ENCODE measurements at regions of chr17 and their contacts with region 1.

Region 1: GRCh38 chr17:64073771-64074703 is 53.6 kb upstream of the ICAM2 start:
- DNase-seq: peak; percentile 62
- ATAC-seq: peak; percentile 96
- H3K4me3 ChIP-seq: peak overlapping the region; percentile 32; the same call in 1 of the 2 replicates
- H3K27ac ChIP-seq: peak overlapping the region; percentile 72
- H3K4me1 ChIP-seq: peaks cover 46% of the 10 kb centered on the region
- H3K27me3 ChIP-seq: no peaks in the 10 kb centered on the region
- CTCF ChIP-seq: no peak
- EP300 ChIP-seq: peak; percentile 66 to 91; a peak in 3 of 4 replicates
- POLR2A ChIP-seq: no peak
- RAD21 ChIP-seq: no peak; the same call in 1 of the 2 replicates

Region 2: GRCh38 chr17:63988741-63989621 is 85.1 kb before region 1 on chr17:
- CTCF ChIA-PET with region 1: no interaction called
- POLR2A ChIA-PET with region 1: no interaction called
- RAD21 ChIA-PET with region 1: no interaction called
- SMC1A ChIA-PET with region 1: no interaction called
- in situ Hi-C with region 1: no loop called
- intact Hi-C with region 1: no loop called
- DNase-seq: no peak
- ATAC-seq: no peak
- H3K4me3 ChIP-seq: no peak overlapping the region
- H3K27ac ChIP-seq: no peak overlapping the region
- H3K4me1 ChIP-seq: no peaks in the 10 kb centered on the region
- H3K27me3 ChIP-seq: no peaks in the 10 kb centered on the region; a peak in 3 of 4 replicates
- CTCF ChIP-seq: no peak
- EP300 ChIP-seq: no peak
- POLR2A ChIP-seq: no peak
- RAD21 ChIP-seq: no peak

Region 3: DNA sequence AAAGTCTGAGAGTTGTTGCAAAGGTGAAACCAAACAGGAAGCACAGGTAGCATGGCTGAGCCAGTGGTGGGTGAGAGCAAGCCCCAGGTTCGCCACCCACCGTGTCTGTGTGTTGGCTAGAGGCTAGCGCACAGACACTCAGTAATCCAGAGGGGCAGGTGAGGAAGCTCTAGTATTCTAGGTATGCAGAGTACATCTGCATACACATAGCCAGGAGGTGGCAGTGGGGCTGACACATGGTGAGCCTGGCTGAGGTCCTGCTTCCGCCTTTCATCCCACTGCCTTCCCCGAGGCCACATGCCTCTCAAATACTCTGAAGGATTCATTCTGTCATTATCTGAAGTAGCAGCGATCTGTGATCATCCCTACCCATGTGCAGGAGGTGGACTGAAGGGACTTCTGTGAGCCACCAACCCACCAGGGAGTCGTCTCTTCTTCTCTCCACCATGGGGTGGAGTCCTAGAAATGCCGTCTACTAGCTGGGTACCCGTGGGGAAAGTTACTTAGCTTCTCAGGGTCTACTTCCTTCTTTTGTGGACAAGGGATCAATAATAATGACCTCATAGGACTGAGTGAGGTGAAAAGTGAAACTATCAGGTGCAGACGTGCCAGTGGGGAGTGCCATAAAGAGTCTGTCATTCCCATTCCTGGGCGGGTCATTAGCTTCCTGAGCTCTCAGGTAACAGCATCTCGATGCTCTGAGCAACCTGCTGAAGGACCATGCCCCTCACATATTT is 17.6 kb before region 1 on chr17:
- CTCF ChIA-PET with region 1: interaction called, 12 read pairs
- POLR2A ChIA-PET with region 1: interaction called, 29 read pairs
- RAD21 ChIA-PET with region 1: interaction called, 25 read pairs
- SMC1A ChIA-PET with region 1: interaction called, 65 read pairs
- in situ Hi-C with region 1: no loop called
- intact Hi-C with region 1: no loop called
- DNase-seq: peak; percentile 57
- ATAC-seq: peak; percentile 88
- H3K4me3 ChIP-seq: no peak overlapping the region
- H3K27ac ChIP-seq: peak overlapping the region; percentile 35
- H3K4me1 ChIP-seq: peaks cover 30% of the 10 kb centered on the region
- H3K27me3 ChIP-seq: no peaks in the 10 kb centered on the region
- CTCF ChIP-seq: peak in 1 of 3 experiments; percentile 13; a peak in 1 of 6 replicates
- EP300 ChIP-seq: peak in 1 of 2 experiments; percentile 43; a peak in 1 of 4 replicates
- POLR2A ChIP-seq: no peak
- RAD21 ChIP-seq: 0 out of 2 replicates have a peak, but pooled peaks have one; percentile 13

Region 4: DNA sequence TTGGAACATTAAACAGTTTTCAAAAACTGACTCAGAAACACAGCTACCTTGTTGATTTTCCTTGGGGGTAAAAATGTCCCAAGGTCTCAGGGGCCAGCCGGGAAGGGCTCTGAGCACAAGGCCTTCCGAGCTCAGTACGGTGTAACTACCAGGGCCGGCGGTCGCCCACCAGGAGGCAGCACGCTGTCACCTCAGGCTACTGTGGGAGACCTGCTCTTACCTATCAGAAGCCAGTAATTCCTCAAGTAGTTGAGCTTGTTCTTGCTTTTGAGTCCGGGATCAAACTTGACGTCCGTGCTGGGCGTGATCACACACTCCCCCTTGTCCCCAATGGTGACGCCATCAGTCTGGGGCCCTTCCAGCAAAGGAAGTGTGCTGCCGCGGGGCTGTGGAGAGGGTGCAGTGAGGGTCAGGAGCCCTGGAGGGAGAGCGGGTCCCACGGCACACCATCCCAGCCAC is 10.2 kb before region 1 on chr17:
- CTCF ChIA-PET with region 1: interaction called, 12 read pairs
- POLR2A ChIA-PET with region 1: interaction called, 29 read pairs
- RAD21 ChIA-PET with region 1: interaction called, 25 read pairs
- SMC1A ChIA-PET with region 1: interaction called, 65 read pairs
- in situ Hi-C with region 1: no loop called
- intact Hi-C with region 1: no loop called
- DNase-seq: no peak
- ATAC-seq: peak; percentile 51
- H3K4me3 ChIP-seq: no peak overlapping the region
- H3K27ac ChIP-seq: peak overlapping the region; percentile 54; the same call in 1 of the 2 replicates
- H3K4me1 ChIP-seq: peaks cover 37% of the 10 kb centered on the region
- H3K27me3 ChIP-seq: no peaks in the 10 kb centered on the region
- CTCF ChIP-seq: peak; percentile 40 to 49 (median 45)
- EP300 ChIP-seq: no peak
- POLR2A ChIP-seq: no peak
- RAD21 ChIP-seq: peak; percentile 63

Region 5: GRCh38 chr17:64091116-64091515 is 17.1 kb after region 1 on chr17:
- CTCF ChIA-PET with region 1: interaction called, 5 read pairs
- POLR2A ChIA-PET with region 1: interaction called, 19 read pairs
- RAD21 ChIA-PET with region 1: interaction called, 7 read pairs
- SMC1A ChIA-PET with region 1: interaction called, 41 read pairs
- in situ Hi-C with region 1: no loop called
- intact Hi-C with region 1: no loop called
- DNase-seq: peak; percentile 57
- ATAC-seq: peak; percentile 90
- H3K4me3 ChIP-seq: peak overlapping the region; percentile 9; the same call in 1 of the 2 replicates
- H3K27ac ChIP-seq: peak overlapping the region; percentile 54
- H3K4me1 ChIP-seq: peaks cover 42% of the 10 kb centered on the region
- H3K27me3 ChIP-seq: no peaks in the 10 kb centered on the region
- CTCF ChIP-seq: no peak
- EP300 ChIP-seq: no peak
- POLR2A ChIP-seq: 0 out of 2 replicates have a peak, but pooled peaks have one; percentile 11
- RAD21 ChIP-seq: no peak

Region 6: DNA sequence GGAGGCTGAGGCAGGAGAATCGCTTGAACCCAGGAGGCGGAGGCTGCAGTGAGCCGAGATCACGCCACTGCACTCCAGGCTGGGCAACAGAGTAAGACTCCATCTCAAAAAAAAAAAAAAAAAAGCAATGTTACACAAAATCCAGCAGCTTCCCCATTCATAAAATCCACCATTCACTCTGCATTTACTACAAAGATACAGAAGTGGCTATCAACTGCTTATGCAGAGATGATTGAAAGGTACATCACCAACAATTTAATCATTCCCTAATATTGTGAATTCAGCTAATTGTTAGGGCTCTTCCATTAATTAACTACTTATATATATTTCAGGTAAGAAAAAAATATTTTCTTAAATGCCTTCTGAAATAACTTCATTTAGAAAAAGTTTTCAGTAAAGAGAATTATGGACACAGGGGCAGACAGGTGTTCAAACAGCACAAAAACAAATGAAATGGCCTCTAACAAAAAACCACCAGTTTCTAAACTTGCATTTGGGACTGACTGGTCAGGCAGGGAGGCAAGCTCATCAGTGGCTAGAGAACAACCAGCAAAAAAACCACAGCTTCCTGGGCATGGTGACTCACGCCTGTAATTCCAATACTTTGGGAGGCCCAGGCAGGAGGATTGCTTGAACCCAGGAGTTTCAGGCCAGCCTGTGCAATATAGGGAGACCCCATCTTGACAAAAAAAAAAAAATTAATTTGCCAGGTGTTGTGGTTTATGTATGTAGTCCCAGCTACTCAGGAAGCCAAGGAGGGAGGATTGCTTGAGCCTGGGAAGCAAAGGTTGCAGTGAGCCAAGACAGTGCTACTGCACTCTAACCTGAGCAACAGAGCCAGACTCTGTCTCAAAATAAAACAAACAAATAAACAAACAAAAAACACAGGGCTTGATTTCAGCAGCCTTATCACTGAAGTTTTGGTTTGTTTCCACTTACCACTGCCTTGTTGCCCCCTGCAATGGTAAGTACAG is 29.6 kb after region 1 on chr17:
- CTCF ChIA-PET with region 1: interaction called, 4 read pairs
- POLR2A ChIA-PET with region 1: interaction called, 4 read pairs
- RAD21 ChIA-PET with region 1: interaction called, 6 read pairs
- SMC1A ChIA-PET with region 1: interaction called, 13 read pairs
- in situ Hi-C with region 1: no loop called
- intact Hi-C with region 1: no loop called
- DNase-seq: peak; percentile 55
- ATAC-seq: peak; percentile 65
- H3K4me3 ChIP-seq: no peak overlapping the region
- H3K27ac ChIP-seq: peak overlapping the region; percentile 57
- H3K4me1 ChIP-seq: peaks cover 39% of the 10 kb centered on the region
- H3K27me3 ChIP-seq: no peaks in the 10 kb centered on the region
- CTCF ChIP-seq: no peak
- EP300 ChIP-seq: no peak
- POLR2A ChIP-seq: no peak
- RAD21 ChIP-seq: no peak

Region 7: GRCh38 chr17:64117981-64118979 is 44.2 kb after region 1 on chr17:
- CTCF ChIA-PET with region 1: interaction called, 4 read pairs
- POLR2A ChIA-PET with region 1: interaction called, 18 read pairs
- RAD21 ChIA-PET with region 1: interaction called, 30 read pairs
- SMC1A ChIA-PET with region 1: interaction called, 33 read pairs
- in situ Hi-C with region 1: no loop called
- intact Hi-C with region 1: no loop called
- DNase-seq: no peak
- ATAC-seq: no peak
- H3K4me3 ChIP-seq: no peak overlapping the region
- H3K27ac ChIP-seq: no peak overlapping the region
- H3K4me1 ChIP-seq: peaks cover 30% of the 10 kb centered on the region
- H3K27me3 ChIP-seq: no peaks in the 10 kb centered on the region
- CTCF ChIP-seq: no peak
- EP300 ChIP-seq: no peak
- POLR2A ChIP-seq: no peak
- RAD21 ChIP-seq: no peak